ENCODE measurements at regions of chr9 and their contacts with region 1.

Region 1: DNA sequence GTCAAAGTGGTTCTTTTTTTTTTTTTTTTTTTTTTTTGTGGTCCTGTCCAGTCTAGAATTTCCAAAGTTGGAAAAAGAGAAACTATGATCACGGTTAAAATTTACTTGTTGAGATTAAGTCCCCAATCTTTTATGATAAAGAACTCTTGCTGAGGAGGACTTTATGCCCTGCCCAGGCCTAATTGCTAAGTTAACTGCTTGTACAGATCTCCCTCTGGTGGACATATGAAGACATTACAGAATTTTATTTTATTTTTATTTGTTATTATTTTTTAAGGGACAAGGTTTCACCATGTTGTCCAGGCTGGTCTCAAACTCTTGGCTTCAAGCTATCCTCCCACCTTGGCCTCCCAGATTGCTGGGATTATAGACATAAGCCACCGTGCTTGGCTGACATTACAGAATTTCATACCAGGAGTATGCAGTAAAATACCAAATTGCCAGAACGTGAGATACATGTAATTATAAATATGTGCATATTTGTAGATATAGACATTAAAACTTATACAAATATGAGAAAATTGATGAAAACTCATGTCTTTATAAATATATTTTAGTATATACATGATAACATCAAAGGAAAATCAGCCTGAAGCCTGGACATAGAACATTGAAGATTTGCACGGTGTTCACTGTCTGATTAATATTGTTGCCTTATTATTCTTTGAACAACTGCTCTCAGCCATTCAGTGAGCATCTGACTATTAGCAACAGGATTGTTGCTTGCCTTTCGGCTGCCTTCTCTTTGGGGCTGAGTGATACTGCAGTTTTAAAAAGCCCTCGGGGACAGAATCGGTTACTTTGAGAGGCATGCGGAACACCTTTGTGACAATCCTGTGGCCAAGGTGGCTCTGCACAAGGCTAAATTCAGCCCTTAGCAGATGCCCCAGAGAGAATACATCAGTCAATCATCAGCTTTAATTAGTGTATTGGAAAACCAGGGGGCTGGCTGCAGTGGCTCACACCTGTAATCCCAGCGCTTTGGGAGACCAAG is 91.0 kb downstream of the RFK start:
- DNase-seq: peak; percentile 27
- H3K4me3 Mint-ChIP-seq: no peak overlapping the region
- H3K27ac Mint-ChIP-seq: no peak overlapping the region
- H3K4me1 Mint-ChIP-seq: no peaks in the 10 kb centered on the region
- H3K27me3 Mint-ChIP-seq: peaks cover 9% of the 10 kb centered on the region

Region 2: GRCh38 chr9:75265525-75265972 is 1037.7 kb before region 1 on chr9:
- CTCF ChIA-PET with region 1: interaction called, 22 read pairs
- DNase-seq: peak; percentile 61
- H3K4me3 Mint-ChIP-seq: no peak overlapping the region
- H3K27ac Mint-ChIP-seq: no peak overlapping the region
- H3K4me1 Mint-ChIP-seq: no peaks in the 10 kb centered on the region
- H3K27me3 Mint-ChIP-seq: no peaks in the 10 kb centered on the region

Region 3: DNA sequence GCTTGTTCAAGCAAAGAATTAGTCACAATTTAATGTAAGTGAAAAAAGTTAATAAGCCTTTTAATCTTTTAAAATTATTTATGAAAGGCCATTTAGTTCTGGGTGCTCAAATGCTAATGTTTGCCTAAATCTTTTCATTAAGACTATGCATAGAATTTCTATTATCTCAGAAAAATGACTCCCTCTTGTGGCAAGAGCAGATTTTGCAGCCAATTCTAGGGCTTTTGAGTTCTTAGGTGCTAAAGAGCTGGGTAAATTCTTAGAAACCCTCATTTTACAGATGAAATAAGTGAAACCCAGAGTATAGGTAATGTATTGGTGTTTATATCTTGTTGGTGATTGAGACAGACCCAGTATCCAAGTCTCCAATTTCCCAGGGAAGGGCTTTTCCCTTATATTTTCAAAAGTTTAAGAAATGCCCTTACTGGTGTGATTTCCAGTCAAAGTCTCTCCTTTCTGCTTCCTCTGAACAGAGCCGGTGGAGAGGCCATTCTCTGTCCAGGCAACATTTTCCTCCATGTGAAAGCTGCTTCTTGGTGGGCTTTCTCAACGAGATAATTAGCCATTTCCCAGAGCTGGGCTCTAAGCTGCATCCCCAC is 436.9 kb before region 1 on chr9:
- CTCF ChIA-PET with region 1: interaction called, 11 read pairs
- DNase-seq: peak; percentile 59
- H3K4me3 Mint-ChIP-seq: no peak overlapping the region
- H3K27ac Mint-ChIP-seq: no peak overlapping the region
- H3K4me1 Mint-ChIP-seq: peaks cover 3% of the 10 kb centered on the region
- H3K27me3 Mint-ChIP-seq: no peaks in the 10 kb centered on the region

Region 4: DNA sequence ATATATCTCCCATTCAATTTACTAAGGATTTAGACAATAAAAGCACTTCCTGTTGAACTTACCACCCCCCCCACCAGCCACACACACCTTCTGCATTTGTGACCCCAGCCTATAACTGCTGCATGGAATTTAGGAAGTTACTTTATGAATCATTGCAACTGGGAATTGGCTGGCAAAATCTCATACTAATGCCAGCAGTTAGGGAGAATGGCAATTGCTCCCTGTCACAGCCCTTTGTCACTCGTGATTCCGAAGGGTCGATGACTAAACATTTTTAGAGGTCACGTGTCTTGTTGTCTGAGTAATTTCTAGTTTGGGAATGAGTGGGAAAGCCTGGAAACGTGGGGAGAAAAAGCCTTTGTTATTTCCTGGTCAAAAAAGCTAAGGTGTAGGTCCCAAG is 414.4 kb after region 1 on chr9:
- CTCF ChIA-PET with region 1: no interaction called
- DNase-seq: no peak
- H3K4me3 Mint-ChIP-seq: no peak overlapping the region
- H3K27ac Mint-ChIP-seq: no peak overlapping the region
- H3K4me1 Mint-ChIP-seq: no peaks in the 10 kb centered on the region
- H3K27me3 Mint-ChIP-seq: peaks cover 8% of the 10 kb centered on the region